AG04449 (cell line): ENCODE measurements at regions of chr2 and their contacts with region 1.

Region 1: GRCh38 chr2:74715078-74715791 is 61.2 kb downstream of the SEMA4F start:
- DNase-seq: no peak
- H3K4me3 ChIP-seq: peak overlapping the region; percentile 61
- CTCF ChIP-seq: peak; percentile 95

Region 2: DNA sequence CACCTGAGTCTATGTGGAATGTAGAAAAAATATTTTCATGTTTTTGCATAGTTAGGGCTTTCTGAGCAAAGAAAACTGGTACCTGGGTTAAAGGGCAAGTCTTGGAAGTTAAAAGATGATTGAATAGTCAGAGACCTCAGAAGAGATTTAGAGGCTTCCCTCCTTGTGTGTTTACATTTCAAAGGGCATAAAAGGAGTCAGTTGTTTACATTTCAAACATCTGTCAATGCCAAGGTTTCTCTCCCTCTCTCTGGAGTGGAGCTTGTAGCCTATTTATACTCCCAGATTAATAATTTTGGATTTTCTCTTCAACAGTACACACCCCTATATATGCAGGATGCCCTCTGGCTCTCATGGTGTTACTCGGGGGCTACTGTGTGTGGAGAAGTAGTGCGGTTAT is 75.7 kb before region 1 on chr2:
- CTCF ChIA-PET with region 1: no interaction called
- POLR2A ChIA-PET with region 1: no interaction called
- DNase-seq: no peak
- H3K4me3 ChIP-seq: no peak overlapping the region
- CTCF ChIP-seq: no peak

Region 3: DNA sequence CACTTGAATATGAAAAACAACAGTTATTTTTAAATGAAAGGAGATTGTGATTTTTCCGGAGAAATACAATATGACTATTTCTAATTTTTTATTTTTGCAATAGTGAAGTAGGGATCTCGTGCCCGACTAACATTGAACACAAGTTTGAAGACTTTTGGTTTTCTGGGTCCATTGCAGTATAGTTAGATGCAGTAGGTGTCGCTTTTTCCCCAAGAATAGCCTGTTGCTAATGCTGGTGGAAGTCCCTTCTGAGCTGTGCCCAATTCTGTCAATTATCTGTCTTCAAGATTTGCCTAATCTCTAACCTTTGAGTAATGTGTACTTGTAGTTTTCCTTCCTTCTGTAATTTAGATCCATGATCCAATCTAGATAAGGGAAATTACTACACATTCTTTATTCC is 24.7 kb before region 1 on chr2:
- CTCF ChIA-PET with region 1: interaction called, 20 read pairs
- POLR2A ChIA-PET with region 1: no interaction called
- DNase-seq: no peak
- H3K4me3 ChIP-seq: no peak overlapping the region
- CTCF ChIP-seq: peak; percentile 64

Region 4: GRCh38 chr2:74725287-74725686 is 10.1 kb after region 1 on chr2:
- CTCF ChIA-PET with region 1: interaction called, 35 read pairs
- POLR2A ChIA-PET with region 1: no interaction called
- DNase-seq: no peak
- H3K4me3 ChIP-seq: no peak overlapping the region
- CTCF ChIP-seq: no peak

Region 5: DNA sequence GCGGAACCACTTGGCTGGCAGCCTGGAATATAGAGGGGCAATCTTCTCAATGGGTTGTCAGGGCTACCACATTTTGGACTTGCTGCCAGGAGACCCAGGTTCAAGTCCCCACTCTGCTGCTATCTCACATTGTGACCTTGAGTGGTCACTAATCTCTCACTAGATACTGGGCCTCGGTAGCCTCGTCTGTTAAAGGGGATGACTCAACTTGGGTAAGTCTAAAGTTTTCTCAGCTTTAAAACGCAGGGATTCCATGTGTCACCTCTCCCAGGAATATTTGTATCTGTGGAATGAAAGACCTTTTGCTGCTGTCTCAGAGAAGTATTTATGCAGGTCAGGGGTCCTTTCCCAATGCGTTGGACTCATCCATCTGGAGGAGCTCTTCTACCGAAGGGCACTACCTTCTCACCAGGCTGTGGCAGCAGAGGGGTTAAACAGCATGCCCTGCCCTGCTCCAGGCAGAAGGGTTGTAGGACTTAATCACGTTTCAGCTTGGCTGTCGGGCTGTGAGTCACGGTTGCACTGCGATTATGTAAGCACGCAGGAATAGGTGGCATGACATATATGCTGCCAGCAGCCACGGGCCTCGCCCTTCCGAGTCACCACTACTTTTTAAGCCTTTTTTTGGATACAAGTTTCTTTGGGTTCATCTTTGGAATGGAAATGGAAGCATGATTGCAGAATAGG is 25.3 kb after region 1 on chr2:
- CTCF ChIA-PET with region 1: interaction called, 43 read pairs
- POLR2A ChIA-PET with region 1: no interaction called
- DNase-seq: peak; percentile 94
- H3K4me3 ChIP-seq: no peak overlapping the region; the same call in none of the 2 replicates
- CTCF ChIP-seq: no peak

Region 6: GRCh38 chr2:74845217-74846011 is 130.2 kb after region 1 on chr2:
- CTCF ChIA-PET with region 1: interaction called, 95 read pairs
- POLR2A ChIA-PET with region 1: interaction called, 3 read pairs
- DNase-seq: peak; percentile 52
- H3K4me3 ChIP-seq: peak overlapping the region; percentile 25
- CTCF ChIP-seq: no peak

Region 7: GRCh38 chr2:74887445-74887951 is 172.3 kb after region 1 on chr2:
- CTCF ChIA-PET with region 1: interaction called, 11 read pairs
- POLR2A ChIA-PET with region 1: no interaction called
- DNase-seq: peak; percentile 67
- H3K4me3 ChIP-seq: no peak overlapping the region
- CTCF ChIP-seq: no peak